ENCODE measurements at regions of chr19 and their contacts with region 1.

Region 1: GRCh38 chr19:44764975-44765948 is 12.4 kb upstream of the CBLC start:
- DNase-seq: no peak
- H3K4me3 ChIP-seq: no peak overlapping the region
- CTCF ChIP-seq: no peak

Region 2: DNA sequence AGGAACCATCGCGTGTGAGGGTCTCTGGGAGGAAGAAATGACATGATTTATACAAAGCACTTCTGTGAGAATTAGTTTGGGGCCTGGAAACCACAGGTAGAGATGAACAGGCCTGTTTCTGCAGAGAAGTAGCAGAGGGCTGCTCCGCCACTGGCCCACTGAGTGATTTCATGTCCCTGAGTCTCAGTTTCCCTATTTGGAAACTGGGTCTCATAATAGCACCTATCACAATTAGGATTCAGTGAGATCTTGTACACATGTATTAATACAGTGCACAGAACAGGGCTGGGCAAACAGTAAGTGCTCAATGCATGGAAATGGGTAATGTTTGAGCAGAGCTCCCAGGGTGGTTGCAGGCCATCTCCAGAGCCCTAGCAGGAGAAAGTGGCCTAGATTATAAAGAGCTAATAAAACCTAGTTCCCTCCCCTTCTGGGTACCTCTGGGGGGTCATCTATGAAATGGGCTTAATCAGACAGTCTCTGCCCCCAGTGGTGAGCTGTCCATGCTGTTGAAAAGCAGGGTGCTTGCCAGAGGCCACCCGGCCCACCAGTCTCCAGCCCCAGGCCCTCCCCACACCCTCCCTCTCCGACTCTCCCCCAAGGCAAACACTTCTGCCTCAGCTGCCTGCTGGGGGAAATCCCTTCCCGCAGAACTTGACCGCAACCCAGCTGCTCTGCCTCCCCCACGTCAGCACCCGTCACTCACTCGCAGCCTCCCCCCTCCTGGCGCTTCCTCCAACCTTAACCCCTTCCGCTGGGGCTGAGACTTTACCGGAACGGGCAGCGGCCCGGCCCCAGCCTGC is 12.2 kb before region 1 on chr19:
- CTCF ChIA-PET with region 1: interaction called, 49 read pairs
- POLR2A ChIA-PET with region 1: interaction called, 12 read pairs
- DNase-seq: peak; percentile 89
- H3K4me3 ChIP-seq: peak overlapping the region; percentile 53
- CTCF ChIP-seq: peak; percentile 12

Region 3: GRCh38 chr19:44785246-44785645 is 20.0 kb after region 1 on chr19:
- CTCF ChIA-PET with region 1: interaction called, 115 read pairs
- POLR2A ChIA-PET with region 1: no interaction called
- DNase-seq: no peak
- H3K4me3 ChIP-seq: no peak overlapping the region
- CTCF ChIP-seq: no peak

Region 4: DNA sequence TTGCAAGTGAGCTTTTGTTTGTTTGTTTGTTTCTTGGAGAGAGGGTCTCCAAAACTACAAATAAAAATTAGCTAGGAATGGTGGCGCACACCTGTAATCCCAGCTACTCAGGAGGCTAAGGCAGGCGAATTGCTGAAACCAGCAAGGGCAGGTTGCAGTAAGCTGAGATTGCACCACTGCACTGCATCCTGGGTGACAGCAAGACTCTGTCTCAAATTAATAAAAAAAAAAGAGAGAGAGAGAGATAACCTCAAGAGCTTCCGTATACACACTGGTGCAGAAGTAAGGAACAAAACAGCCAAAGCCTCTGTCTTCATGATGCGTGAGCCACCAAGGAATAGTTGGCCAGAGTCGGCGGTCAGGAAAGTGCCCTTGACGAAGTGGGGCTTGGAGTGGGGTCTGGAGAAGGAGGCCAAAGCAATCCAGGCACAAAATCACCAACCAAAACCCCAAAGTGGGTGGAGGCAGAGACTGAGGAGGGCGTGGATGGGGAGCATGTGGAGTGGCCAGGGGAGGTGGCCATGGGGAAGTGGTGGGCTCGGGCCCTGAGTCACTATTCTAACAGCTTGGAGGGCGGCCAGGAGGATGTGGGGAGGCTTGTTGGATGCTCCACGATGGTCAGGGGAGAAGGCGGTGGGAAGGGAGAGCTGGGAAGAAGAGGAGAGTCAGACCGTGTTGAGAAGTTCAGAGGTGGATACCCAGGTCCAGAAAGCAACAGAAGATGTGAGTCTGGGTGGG is 104.6 kb after region 1 on chr19:
- CTCF ChIA-PET with region 1: no interaction called
- POLR2A ChIA-PET with region 1: no interaction called
- DNase-seq: no peak
- H3K4me3 ChIP-seq: no peak overlapping the region
- CTCF ChIP-seq: no peak

Region 5: DNA sequence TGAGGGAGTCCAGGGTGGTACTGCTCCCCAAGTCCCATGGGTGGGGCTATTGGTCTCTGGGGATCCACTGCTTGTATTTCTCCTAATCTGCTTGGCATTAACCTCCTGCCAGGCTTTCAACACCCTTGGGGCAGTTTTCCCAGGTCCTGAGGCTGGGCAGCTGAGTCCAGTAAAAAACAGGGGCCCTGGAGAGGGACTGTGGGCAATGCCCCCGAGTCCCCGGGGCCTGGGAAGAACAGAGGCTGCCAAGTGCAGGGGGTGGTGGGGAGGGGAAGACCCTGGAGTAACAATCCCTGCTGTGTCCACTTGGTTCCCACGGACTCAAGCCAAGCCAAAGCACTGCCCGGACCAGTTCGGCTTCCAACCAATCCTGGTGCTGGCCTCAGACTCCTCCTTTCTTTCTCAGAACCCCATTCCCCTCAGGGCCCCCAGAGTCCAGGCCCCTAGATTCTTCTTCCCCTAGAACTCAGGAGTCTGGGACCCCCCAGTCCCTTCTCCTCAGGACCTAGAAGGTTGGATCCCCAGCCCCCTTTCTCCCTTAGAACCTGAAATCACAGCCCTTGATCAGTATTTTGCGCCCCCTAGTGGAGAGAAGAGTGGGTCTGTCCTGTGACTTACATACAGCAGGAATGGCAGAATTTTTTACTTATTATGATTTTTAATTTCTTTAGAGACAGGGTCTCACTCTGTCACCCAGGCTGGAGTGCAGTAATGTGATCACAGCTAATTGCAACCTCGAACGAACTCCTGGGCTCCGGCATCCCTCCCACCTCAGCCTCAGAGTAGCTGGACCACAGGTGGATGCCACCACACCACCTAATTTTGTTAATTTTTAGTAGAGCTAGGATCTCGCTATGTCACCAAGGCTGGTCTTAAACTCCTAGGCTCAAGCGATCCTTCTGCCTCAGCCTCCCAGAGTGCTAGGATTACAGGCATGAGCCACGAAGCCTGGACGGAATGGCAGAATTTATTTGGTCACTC is 186.2 kb after region 1 on chr19:
- CTCF ChIA-PET with region 1: no interaction called
- POLR2A ChIA-PET with region 1: no interaction called
- DNase-seq: peak; percentile 14
- H3K4me3 ChIP-seq: no peak overlapping the region
- CTCF ChIP-seq: peak; percentile 80